ENCODE measurements at regions of chr20 and their contacts with region 1.

Region 1: DNA sequence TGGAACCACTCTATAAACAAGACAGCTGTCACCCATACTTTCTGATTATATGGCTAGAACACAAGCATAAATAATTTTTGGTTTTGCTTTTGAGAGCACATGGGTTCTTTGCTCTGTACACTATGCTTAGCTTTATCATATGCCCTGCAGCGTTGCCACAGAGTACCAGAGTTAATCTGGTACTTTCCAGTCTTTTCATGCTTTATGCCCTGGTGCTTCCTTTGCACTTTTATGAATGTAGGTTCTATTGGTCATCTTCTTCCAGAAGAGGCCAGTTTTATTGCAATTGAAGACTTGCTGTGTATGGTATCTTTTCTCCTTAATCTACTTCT is 20.8 kb downstream of the SHLD1 start:
- DNase-seq: no peak
- ATAC-seq: peak; percentile 88
- H3K4me3 Mint-ChIP-seq: peak overlapping the region; percentile 26
- H3K27ac Mint-ChIP-seq: peak overlapping the region; percentile 79
- H3K4me1 Mint-ChIP-seq: peaks cover 79% of the 10 kb centered on the region
- H3K27me3 Mint-ChIP-seq: no peaks in the 10 kb centered on the region
- CTCF ChIP-seq: no peak

Region 2: DNA sequence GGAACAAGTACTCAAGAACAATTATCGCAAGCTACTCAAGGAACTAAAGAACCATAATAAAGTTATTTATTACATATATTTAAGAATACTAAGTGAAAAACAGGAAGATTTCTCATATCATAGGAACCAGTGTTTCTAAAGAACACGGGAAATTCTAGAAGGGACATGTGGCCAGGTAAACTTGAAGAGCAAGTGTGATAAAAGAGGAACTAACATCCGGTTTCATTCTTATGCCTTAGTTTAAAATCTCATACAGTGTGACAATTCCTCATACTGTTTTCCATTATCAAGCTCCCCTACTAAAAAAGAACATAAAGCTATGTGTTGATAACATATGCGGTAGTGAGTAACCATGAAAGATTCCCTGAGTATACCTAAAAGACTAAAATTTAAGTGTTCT is 184.2 kb before region 1 on chr20:
- CTCF ChIA-PET with region 1: no interaction called
- POLR2A ChIA-PET with region 1: interaction called, 3 read pairs
- intact Hi-C with region 1: loop called (anchors 5 kb)
- DNase-seq: no peak
- ATAC-seq: peak; percentile 69
- H3K4me3 Mint-ChIP-seq: peak overlapping the region; percentile 20
- H3K27ac Mint-ChIP-seq: peak overlapping the region; percentile 67
- H3K4me1 Mint-ChIP-seq: peaks cover 48% of the 10 kb centered on the region
- H3K27me3 Mint-ChIP-seq: no peaks in the 10 kb centered on the region
- CTCF ChIP-seq: no peak

Measured in activated B cell treated with CpG ODN at 0.5 μM for 24 hours (primary cell).